GM10248 (cell line): ENCODE measurements at regions of chr1 and their contacts with region 1.

Region 1: DNA sequence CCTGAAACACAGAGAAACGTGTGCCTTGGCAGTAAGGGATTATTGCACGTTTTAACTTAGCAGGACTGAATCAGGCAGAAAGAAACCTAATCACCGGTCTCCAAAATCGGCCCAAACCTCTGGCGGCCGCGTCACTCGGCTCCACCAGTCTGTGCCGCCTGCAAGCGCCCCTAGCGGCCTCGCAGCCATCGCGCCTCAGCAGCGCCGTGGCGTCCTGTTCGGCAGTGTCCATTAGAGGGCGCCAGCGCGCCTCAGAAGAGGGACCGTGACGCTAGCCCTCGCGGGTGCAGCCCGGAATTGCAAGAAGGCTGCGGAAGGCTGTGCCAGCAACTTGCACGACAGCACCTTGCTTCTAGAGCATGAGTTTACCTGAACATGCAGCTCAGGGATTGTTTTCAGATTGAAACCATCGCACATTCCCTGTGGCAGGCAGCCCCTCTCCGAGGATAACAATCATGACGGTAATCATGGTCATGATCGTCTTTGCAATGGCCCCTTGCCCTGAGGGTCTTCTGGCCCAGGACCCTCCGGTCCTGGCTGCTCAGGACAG is 164.4 kb downstream of the TRIM33 start:
- DNase-seq: peak; percentile 96
- CTCF ChIP-seq: peak; percentile 100

Region 2: GRCh38 chr1:114330451-114330983 is 16.0 kb before region 1 on chr1:
- CTCF ChIA-PET with region 1: interaction called, 36 read pairs
- POLR2A ChIA-PET with region 1: no interaction called
- DNase-seq: no peak
- CTCF ChIP-seq: no peak

Region 3: DNA sequence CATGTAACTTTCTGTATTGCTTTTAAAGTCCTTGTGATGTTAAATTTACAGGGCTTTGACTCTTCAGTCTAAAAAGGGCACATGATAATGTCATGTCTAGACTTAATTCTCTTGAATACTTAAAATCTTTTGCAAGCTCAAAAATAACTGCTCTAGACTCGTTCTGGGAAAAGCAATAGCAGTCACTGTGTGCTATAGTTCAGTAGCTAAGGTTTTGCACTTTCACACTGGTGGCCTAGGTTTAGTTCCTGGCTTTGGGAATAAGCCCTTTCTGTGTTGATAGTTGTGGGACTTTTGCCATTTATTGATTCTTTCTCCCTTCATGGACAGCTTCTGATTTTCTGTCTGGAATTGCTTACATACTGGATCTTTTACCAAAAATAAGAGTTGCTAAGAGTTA is 13.2 kb after region 1 on chr1:
- CTCF ChIA-PET with region 1: interaction called, 15 read pairs
- POLR2A ChIA-PET with region 1: no interaction called
- DNase-seq: no peak
- CTCF ChIP-seq: no peak

Region 4: GRCh38 chr1:114558544-114558943 is 212.0 kb after region 1 on chr1:
- CTCF ChIA-PET with region 1: interaction called, 42 read pairs
- POLR2A ChIA-PET with region 1: no interaction called
- DNase-seq: peak; percentile 43
- CTCF ChIP-seq: peak; percentile 34

Region 5: GRCh38 chr1:114569006-114569405 is 222.5 kb after region 1 on chr1:
- CTCF ChIA-PET with region 1: interaction called, 13 read pairs
- POLR2A ChIA-PET with region 1: no interaction called
- DNase-seq: no peak
- CTCF ChIP-seq: no peak

Region 6: DNA sequence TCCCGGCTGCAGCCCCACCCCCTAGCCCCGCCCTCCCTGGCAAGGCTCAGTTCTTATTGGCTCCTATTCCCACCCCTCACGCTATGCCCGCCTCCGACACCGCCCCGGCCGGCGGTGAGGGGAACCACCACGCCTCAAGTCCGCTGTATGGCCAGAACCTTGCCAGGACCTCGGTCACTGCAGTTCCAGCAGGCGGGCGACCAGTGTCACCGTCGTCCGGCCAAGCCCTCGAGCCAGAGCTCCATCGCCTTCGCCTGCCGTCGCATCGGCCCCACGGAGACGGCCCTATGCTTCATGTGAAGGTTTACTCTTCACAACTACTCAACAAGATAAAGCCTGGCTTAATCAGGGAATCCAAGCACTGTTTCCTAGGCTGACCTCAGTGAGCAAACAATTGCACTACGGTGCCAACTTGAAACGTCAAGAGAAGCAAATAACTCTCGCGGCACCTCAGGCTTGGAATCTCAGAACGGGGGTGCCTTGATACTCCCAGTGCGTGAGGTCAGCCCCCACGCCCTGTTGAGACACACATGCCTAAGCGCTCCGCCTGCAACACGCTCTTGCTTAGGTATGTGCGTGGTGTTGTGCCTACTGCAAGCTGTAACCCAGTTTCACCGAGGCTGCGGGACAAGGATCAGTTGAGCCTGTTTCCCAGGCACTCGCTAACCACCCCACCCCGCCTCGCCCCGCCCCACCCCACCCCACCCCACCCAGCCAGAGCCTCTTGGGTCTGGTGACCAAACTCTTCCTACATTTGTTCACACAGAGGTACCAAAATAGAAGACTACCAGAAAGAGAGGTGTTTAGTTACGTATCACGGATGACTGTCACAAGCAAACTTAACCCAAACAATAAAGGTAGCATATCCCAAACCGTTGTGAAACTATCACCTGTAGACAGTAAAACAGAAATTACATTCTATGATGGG is 323.8 kb after region 1 on chr1:
- CTCF ChIA-PET with region 1: interaction called, 39 read pairs
- POLR2A ChIA-PET with region 1: no interaction called
- DNase-seq: peak; percentile 96
- CTCF ChIP-seq: peak; percentile 6

Region 7: GRCh38 chr1:115052454-115053083 is 706.0 kb after region 1 on chr1:
- CTCF ChIA-PET with region 1: interaction called, 18 read pairs
- POLR2A ChIA-PET with region 1: no interaction called
- DNase-seq: peak; percentile 54
- CTCF ChIP-seq: peak; percentile 93